ENCODE measurements at regions of chr17 and their contacts with region 1.

Region 1: DNA sequence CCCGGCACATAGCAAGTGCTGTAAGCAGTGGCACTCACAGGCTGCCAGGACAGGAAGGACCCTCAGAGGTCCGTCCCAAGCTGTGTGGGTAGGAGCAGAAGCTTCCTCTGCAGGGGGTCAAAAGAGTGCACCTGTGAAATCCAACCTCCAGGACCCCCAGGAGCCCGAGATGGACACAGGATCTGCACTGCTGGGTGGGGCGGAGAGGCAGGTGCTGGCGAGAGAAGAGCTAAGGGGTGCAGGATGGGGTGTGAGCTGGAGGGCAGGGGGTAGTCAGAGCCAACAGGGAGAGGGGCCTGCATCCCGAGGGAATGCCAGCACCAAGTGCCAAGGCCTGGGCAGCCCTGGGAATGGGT is 650 bp upstream of the AANAT start:
- DNase-seq: no peak
- H3K4me3 Mint-ChIP-seq: no peak overlapping the region
- H3K27ac Mint-ChIP-seq: no peak overlapping the region
- H3K4me1 Mint-ChIP-seq: no peaks in the 10 kb centered on the region
- H3K27me3 Mint-ChIP-seq: no peaks in the 10 kb centered on the region
- CTCF ChIP-seq: no peak

Region 2: GRCh38 chr17:76506408-76507349 is 39.9 kb after region 1 on chr17:
- CTCF ChIA-PET with region 1: interaction called, 6 read pairs
- intact Hi-C with region 1: loop called (anchors 1 kb)
- DNase-seq: peak; percentile 90
- H3K4me3 Mint-ChIP-seq: no peak overlapping the region
- H3K27ac Mint-ChIP-seq: no peak overlapping the region
- H3K4me1 Mint-ChIP-seq: peaks cover 4% of the 10 kb centered on the region
- H3K27me3 Mint-ChIP-seq: peaks cover 39% of the 10 kb centered on the region
- CTCF ChIP-seq: peak; percentile 93

Measured in Calu3 (cell line).